ENCODE measurements at regions of chr11 and their contacts with region 1.

Region 1: DNA sequence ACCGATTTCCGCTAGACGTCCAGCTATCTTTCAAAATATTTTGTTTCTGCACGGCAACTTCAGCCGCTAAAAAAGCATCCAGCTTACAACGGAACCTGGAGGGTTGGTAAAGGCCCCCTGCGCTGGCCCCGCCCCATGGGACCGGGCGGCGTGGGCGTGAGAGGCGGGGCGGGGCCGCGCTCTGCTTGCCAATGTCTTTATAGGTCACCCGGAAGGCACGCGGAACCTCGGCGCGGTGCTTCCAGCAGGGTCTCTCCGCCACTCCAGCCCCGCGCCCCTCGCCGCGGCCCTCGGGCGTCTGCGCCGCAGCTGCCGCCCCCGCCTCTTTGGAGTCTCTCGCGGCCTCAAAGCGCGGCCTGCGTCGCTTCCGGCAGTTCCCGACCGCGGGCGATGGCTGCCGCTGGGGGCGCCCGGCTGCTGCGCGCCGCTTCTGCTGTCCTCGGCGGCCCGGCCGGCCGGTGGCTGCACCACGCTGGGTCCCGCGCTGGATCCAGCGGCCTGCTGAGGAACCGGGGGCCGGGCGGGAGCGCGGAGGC is at the start of gene FDX1:
- DNase-seq: peak; percentile 80
- H3K4me3 Mint-ChIP-seq: peak within 1 kb of the TSS; percentile 96
- H3K27ac Mint-ChIP-seq: peak within 1 kb of the TSS; percentile 86
- H3K4me1 Mint-ChIP-seq: peaks cover 40% of the 10 kb centered on the region
- H3K27me3 Mint-ChIP-seq: no peaks in the 10 kb centered on the region
- total RNA-seq, gene FDX1: 10.9 to 11.6 TPM

Region 2: GRCh38 chr11:110296226-110297075 is 133.3 kb before region 1 on chr11 and contains the start of gene RDX:
- CTCF ChIA-PET with region 1: interaction called, 22 read pairs
- POLR2A ChIA-PET with region 1: interaction called, 3 read pairs
- DNase-seq: peak; percentile 66
- H3K4me3 Mint-ChIP-seq: peak within 1 kb of the TSS; percentile 91
- H3K27ac Mint-ChIP-seq: peak within 1 kb of the TSS; percentile 77
- H3K4me1 Mint-ChIP-seq: peaks cover 45% of the 10 kb centered on the region
- H3K27me3 Mint-ChIP-seq: no peaks in the 10 kb centered on the region
- total RNA-seq, gene RDX: 53.5 to 54.4 TPM

Region 3: DNA sequence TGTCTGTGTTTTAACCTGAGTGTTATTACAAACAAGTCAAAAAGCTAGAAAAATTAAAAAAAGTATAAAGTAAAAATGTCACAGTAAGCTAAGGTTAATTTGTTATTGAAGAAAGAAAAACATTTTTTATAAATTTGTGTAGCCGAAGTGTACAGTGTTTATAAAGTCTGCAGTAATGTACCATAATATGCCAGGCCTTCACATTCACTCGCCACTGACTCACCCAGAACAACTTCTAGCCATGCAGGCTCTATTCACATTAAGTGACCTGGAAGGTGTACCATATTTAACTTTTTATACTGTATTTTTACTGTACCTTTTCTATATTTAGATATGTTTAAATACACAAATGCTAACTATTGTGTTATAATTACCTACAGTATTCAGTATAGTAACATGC is 14.7 kb before region 1 on chr11:
- CTCF ChIA-PET with region 1: interaction called, 19 read pairs
- POLR2A ChIA-PET with region 1: no interaction called
- DNase-seq: no peak
- H3K4me3 Mint-ChIP-seq: no peak overlapping the region
- H3K27ac Mint-ChIP-seq: no peak overlapping the region
- H3K4me1 Mint-ChIP-seq: no peaks in the 10 kb centered on the region
- H3K27me3 Mint-ChIP-seq: peaks cover 3% of the 10 kb centered on the region

Region 4: GRCh38 chr11:110453684-110454354 is 24.0 kb after region 1 on chr11:
- CTCF ChIA-PET with region 1: interaction called, 11 read pairs
- POLR2A ChIA-PET with region 1: interaction called, 5 read pairs
- DNase-seq: no peak
- H3K4me3 Mint-ChIP-seq: no peak overlapping the region
- H3K27ac Mint-ChIP-seq: peak overlapping the region; percentile 52
- H3K4me1 Mint-ChIP-seq: peaks cover 53% of the 10 kb centered on the region
- H3K27me3 Mint-ChIP-seq: no peaks in the 10 kb centered on the region